GM12878 (cell line): ENCODE measurements at regions of chr17 and their contacts with region 1.

Region 1: GRCh38 chr17:1488030-1488863 is 4.2 kb downstream of the MYO1C start:
- DNase-seq: no peak
- ATAC-seq: peak; percentile 53
- H3K4me3 ChIP-seq: peak overlapping the region; percentile 68
- H3K27ac ChIP-seq: peak overlapping the region; percentile 84
- H3K4me1 ChIP-seq: peaks cover 22% of the 10 kb centered on the region
- H3K27me3 ChIP-seq: no peaks in the 10 kb centered on the region
- CTCF ChIP-seq: no peak
- EP300 ChIP-seq: no peak
- POLR2A ChIP-seq: no peak
- RAD21 ChIP-seq: no peak

Region 2: DNA sequence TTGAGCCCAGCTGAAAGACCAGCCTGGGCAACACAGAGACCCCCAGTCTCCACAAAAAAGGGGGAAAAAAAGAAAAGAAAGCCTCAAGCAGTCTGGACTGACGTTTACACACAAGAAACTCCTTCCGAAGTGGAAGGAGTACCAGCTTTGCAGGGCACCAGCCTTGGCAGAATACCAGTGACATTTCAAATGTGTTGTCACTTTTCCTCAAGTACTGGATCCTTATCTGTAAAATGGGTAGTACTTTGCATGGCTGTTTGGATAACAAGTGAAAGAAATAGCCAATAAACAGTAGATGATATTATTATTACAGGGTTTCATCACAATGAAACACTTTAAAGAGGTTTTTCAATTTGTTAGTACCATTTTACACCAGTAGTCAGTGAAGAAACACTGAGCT is 102.4 kb before region 1 on chr17:
- CTCF ChIA-PET with region 1: no interaction called
- POLR2A ChIA-PET with region 1: no interaction called
- RAD21 ChIA-PET with region 1: no interaction called
- SMC1A ChIA-PET with region 1: no interaction called
- in situ Hi-C with region 1: no loop called
- intact Hi-C with region 1: no loop called
- DNase-seq: no peak
- ATAC-seq: no peak
- H3K4me3 ChIP-seq: no peak overlapping the region
- H3K27ac ChIP-seq: no peak overlapping the region
- H3K4me1 ChIP-seq: peaks cover 8% of the 10 kb centered on the region
- H3K27me3 ChIP-seq: no peaks in the 10 kb centered on the region
- CTCF ChIP-seq: no peak
- EP300 ChIP-seq: no peak
- POLR2A ChIP-seq: no peak
- RAD21 ChIP-seq: no peak

Region 3: DNA sequence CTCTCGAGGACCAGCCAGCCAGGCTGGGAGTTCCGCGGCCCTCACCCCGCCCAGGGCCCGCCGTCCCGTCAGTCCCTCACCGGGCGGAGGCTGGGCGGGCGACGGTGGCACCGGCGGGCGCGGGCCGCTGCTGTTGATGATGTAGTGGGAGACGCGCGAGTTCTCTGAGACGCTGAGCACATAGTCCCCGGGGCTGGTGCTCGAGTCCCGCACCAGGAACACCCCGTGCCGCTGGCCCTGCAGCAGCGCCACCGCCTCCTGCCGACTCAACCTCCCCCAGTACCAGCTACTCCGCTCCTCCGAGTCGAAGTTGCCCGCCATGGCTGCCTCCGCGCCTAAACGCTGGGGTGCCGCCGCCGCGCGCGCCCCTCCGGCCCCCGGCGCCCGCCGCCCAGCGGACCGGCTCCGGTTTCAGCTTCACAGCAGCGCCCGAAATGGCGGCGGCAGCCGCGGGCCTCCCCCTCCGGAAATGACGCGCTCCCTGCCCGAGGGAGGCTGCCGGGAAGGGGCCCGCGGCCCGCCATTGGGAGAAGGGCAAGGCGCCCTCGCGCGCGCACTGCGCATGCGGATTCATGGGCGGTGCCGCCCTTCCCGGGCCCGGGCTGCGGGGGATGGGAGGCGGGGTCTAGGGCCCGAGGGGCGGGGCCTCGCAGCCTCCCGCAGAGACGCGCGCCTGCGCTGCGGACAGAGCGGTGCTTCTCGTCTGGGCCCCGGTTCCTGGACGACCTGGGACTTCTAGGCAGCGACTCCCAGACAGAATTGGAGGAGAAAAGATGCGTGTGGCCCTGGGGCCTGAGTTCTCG is 32.2 kb before region 1 on chr17 and contains the start of gene CRK:
- CTCF ChIA-PET with region 1: no interaction called
- POLR2A ChIA-PET with region 1: interaction called, 3 read pairs
- RAD21 ChIA-PET with region 1: interaction called, 3 read pairs
- SMC1A ChIA-PET with region 1: interaction called, 3 read pairs
- in situ Hi-C with region 1: no loop called
- intact Hi-C with region 1: loop called (anchors 2 kb)
- DNase-seq: peak; percentile 73
- ATAC-seq: peak; percentile 92
- H3K4me3 ChIP-seq: peak within 1 kb of the TSS; percentile 73
- H3K27ac ChIP-seq: peak within 1 kb of the TSS; percentile 89
- H3K4me1 ChIP-seq: peaks cover 3% of the 10 kb centered on the region; the same call in 1 of the 2 replicates
- H3K27me3 ChIP-seq: no peaks in the 10 kb centered on the region
- CTCF ChIP-seq: no peak
- EP300 ChIP-seq: no peak
- POLR2A ChIP-seq: peak; percentile 85
- RAD21 ChIP-seq: 0 out of 2 replicates have a peak, but pooled peaks have one; percentile 1
- polyA plus RNA-seq, gene CRK: 11.1 to 11.3 TPM

Region 4: DNA sequence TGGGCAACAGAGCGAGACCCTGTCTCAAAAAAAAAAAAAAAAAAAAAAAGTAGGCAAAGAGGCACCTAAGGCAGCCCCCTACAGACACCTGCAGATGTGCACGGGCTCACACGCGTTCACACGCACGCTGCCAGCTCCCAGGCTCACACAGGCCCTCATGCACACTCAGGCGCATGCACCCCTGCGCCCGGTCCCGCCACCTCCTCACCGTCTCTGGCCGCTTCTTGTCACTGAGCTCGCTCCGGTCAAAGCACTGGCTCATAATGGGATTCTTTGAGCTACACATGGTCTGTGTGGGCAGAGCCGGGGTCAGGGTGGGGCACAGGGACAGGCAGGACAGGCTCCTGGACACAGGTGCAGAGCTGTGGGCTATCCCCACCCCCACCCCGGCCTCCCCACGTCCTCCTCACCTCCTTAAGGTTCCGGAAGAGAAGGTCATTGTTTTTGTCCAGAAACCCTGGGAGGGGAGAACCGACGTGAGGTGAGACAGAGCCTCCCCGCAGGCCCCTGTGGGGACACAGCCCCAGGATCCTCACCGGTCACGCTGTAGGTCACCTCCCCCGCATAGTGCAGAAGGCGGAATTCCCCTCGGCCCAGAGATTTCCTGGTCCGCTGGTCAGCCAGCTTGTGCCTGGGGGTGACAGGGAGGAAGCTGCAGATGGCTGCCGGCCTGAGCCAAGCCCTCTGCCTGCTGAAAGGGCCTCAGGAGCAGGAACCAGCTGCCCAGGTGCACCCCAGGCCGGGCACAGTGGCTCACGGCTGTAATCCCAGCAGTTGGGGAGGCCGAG is 13.7 kb before region 1 on chr17:
- CTCF ChIA-PET with region 1: interaction called, 3 read pairs
- POLR2A ChIA-PET with region 1: interaction called, 22 read pairs
- RAD21 ChIA-PET with region 1: interaction called, 16 read pairs
- SMC1A ChIA-PET with region 1: interaction called, 5 read pairs
- in situ Hi-C with region 1: no loop called
- intact Hi-C with region 1: no loop called
- DNase-seq: peak; percentile 67
- ATAC-seq: peak; percentile 87
- H3K4me3 ChIP-seq: peak overlapping the region; percentile 63
- H3K27ac ChIP-seq: peak overlapping the region; percentile 54
- H3K4me1 ChIP-seq: peaks cover 27% of the 10 kb centered on the region
- H3K27me3 ChIP-seq: no peaks in the 10 kb centered on the region
- CTCF ChIP-seq: no peak
- EP300 ChIP-seq: peak in 1 of 2 experiments; percentile 59; a peak in 2 of 4 replicates
- POLR2A ChIP-seq: peak; percentile 66
- RAD21 ChIP-seq: no peak